Activated CD8-positive, alpha-beta memory T cell treated with anti-CD3 and anti-CD28 coated beads, Interleukin-2, amount 10 ng/mL, durations not matched to agents 7 days and 5 days (primary cell): ENCODE measurements at regions of chr17 and their contacts with region 1.

Region 1: GRCh38 chr17:7232114-7232513 is 2.2 kb downstream of the DVL2 start:
- DNase-seq: no peak
- ATAC-seq: no peak
- H3K4me3 Mint-ChIP-seq: peak overlapping the region; percentile 22
- H3K27ac Mint-ChIP-seq: no peak overlapping the region
- H3K4me1 Mint-ChIP-seq: peaks cover 43% of the 10 kb centered on the region
- H3K27me3 Mint-ChIP-seq: no peaks in the 10 kb centered on the region

Region 2: GRCh38 chr17:7219812-7220581 is 12.1 kb before region 1 on chr17 and contains the starts of genes ACADVL and DLG4:
- CTCF ChIA-PET with region 1: interaction called, 11 read pairs
- DNase-seq: peak; percentile 89
- ATAC-seq: peak; percentile 87
- H3K4me3 Mint-ChIP-seq: peak within 1 kb of the TSS; percentile 91
- H3K27ac Mint-ChIP-seq: peak within 1 kb of the TSS; percentile 91
- H3K4me1 Mint-ChIP-seq: peaks cover 44% of the 10 kb centered on the region
- H3K27me3 Mint-ChIP-seq: no peaks in the 10 kb centered on the region
- total RNA-seq, gene ACADVL: 411 to 423 TPM
- total RNA-seq, gene DLG4: 4.9 to 5.3 TPM

Region 3: GRCh38 chr17:7403977-7404736 is 172.0 kb after region 1 on chr17 and contains the start of gene TMEM256:
- CTCF ChIA-PET with region 1: no interaction called
- DNase-seq: peak; percentile 99
- ATAC-seq: peak; percentile 94
- H3K4me3 Mint-ChIP-seq: peak within 1 kb of the TSS; percentile 88
- H3K27ac Mint-ChIP-seq: peak within 1 kb of the TSS; percentile 95
- H3K4me1 Mint-ChIP-seq: peaks cover 15% of the 10 kb centered on the region
- H3K27me3 Mint-ChIP-seq: peaks cover 9% of the 10 kb centered on the region
- total RNA-seq, gene TMEM256: 47.5 to 56.1 TPM